Thyroid gland (tissue), 4 donors: ENCODE measurements at regions of chr9 and their contacts with region 1.

Region 1: DNA sequence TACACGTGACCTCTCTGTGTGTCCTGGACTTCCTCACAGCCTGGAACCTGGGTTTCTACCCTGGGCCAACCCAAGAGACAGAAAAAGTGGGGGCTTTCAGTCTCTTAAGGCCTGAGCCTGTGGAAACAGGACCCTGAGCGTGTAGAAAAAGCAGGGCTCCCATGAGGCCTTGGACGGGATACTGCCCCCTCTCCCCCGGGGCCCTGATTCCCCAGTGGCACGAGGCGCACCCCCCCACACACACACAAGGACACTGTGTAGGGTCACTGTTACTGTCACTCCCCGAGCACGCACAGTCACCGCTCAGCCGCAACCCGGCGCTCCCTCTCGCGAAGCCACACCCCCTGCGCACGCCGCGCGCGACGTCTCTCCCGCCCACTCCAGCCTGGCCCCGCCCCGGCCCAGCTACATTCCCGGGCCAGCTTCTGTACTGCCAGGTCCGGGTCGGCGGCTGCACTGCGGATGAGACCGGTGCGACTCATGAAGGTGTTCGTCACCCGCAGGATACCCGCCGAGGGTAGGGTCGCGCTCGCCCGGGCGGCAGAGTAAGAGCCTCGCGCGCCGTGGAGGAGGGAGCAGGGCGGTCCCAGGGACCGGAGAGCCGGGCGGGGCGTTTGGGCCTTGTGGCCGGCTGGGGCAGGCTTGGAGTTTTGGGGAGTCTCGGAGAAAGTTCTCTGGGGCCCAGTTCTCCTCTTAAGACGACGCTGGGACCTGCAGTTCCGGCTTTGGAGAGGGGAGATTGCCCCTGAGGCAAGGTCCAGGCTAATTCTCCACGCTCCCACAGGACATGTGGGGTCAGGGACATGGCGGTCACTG is at the start of gene GRHPR:
- DNase-seq: peak; percentile 88 to 91
- H3K4me3 ChIP-seq: peak within 1 kb of the TSS; percentile 48 to 83 (median 56)
- H3K27ac ChIP-seq: peak within 1 kb of the TSS; percentile 78 to 87 (median 79)
- H3K4me1 ChIP-seq: peaks cover 16 to 27% of the 10 kb centered on the region in 2 donors
- H3K27me3 ChIP-seq: no peaks in the 10 kb centered on the region
- CTCF ChIP-seq: no peak
- POLR2A ChIP-seq: peak; percentile 23 to 87
- total RNA-seq, gene GRHPR: 79.5 to 157 (median 126) TPM

Region 2: GRCh38 chr9:37464426-37465248 is 42.1 kb after region 1 on chr9:
- intact Hi-C with region 1: loop called (anchors 5 kb)
- DNase-seq: peak; percentile 86 to 89
- H3K4me3 ChIP-seq: peak overlapping the region; percentile 34 to 97 (median 75)
- H3K27ac ChIP-seq: peak overlapping the region; percentile 87 to 98 (median 98)
- H3K4me1 ChIP-seq: peaks cover 20 to 24% of the 10 kb centered on the region in 2 donors
- H3K27me3 ChIP-seq: no peaks in the 10 kb centered on the region
- CTCF ChIP-seq: no peak
- POLR2A ChIP-seq: peak in 1 of 2 donors; percentile 78